ENCODE measurements at regions of chr7 and their contacts with region 1.

Region 1: GRCh38 chr7:134954197-134955082 is 31.9 kb upstream of the AGBL3 start:
- DNase-seq: peak in 6 of 9 donors; percentile 29 to 63 (median 48)
- ATAC-seq: peak; percentile 59
- H3K4me3 ChIP-seq: no peak overlapping the region
- H3K4me3 Mint-ChIP-seq: no peak overlapping the region
- H3K27ac ChIP-seq: no peak overlapping the region
- H3K27ac Mint-ChIP-seq: peak overlapping the region in 1 of 9 donors; percentile 26
- H3K4me1 ChIP-seq: no peaks in the 10 kb centered on the region
- H3K4me1 Mint-ChIP-seq: peaks cover 0 to under 1% (median 0%) of the 10 kb centered on the region in 7 donors
- H3K27me3 ChIP-seq: no peaks in the 10 kb centered on the region
- H3K27me3 Mint-ChIP-seq: no peaks in the 10 kb centered on the region

Region 2: DNA sequence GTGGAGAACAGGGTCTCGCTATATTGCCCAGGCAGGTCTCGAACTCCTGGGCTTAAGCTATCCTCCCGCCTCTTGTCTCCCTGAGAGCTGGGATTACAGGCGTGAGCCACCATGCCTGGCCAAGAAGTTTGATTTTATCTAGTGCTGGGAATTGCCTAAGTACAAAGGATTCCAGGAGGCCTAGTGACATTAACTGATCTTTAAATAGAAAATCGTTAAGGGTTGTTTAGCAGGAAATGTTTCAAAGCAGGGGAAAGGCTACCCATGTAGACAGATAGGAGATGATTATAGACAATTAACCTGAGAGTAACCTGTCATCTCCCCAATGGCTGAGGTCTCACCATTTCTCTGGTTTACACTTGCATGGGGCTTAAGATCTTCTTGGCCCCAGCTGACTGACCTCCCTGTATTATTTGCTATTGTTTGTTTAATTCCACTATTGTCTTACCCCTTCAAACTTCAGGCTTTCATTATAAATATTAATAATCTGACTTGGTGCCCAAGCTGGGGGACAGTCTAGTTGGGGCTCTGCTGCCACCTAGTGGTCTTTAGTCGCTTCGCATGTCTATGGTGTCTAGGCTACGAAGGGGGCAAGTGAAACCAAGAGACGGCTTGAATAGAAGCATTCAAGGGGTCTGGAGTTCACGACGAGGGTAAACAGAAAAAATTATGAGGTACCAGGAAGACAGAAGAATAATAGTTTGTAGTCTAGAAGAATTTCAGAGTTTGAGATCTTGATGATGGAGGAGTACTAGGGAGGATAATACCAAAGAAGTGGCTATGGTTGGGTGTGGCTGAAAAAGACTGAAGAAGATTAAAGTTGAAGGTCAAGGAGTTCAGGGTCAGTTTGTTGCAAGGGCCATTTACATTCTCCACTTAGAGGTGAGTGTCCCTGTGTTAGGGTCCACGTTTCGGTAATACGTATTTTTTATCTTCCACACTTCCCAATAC is 348.2 kb before region 1 on chr7:
- CTCF ChIA-PET with region 1: interaction called, 4 read pairs
- POLR2A ChIA-PET with region 1: no interaction called
- intact Hi-C with region 1: loop called in 1 of 2 experiments (anchors 1 kb)
- DNase-seq: peak; percentile 20 to 64 (median 50)
- ATAC-seq: peak; percentile 92
- H3K4me3 ChIP-seq: no peak overlapping the region
- H3K4me3 Mint-ChIP-seq: peak overlapping the region in 9 of 10 donors; percentile 6 to 85 (median 61)
- H3K27ac ChIP-seq: no peak overlapping the region
- H3K27ac Mint-ChIP-seq: peak overlapping the region in 1 of 9 donors; percentile 80
- H3K4me1 ChIP-seq: no peaks in the 10 kb centered on the region
- H3K4me1 Mint-ChIP-seq: peaks cover 4 to 6% (median 5%) of the 10 kb centered on the region in 7 donors
- H3K27me3 ChIP-seq: no peaks in the 10 kb centered on the region
- H3K27me3 Mint-ChIP-seq: peaks cover 4 to 48% (median 22%) of the 10 kb centered on the region in 5 donors

Region 3: GRCh38 chr7:134701272-134701671 is 253.2 kb before region 1 on chr7:
- CTCF ChIA-PET with region 1: interaction called, 7 read pairs
- POLR2A ChIA-PET with region 1: no interaction called
- intact Hi-C with region 1: loop called in 1 of 2 experiments (anchors 1 kb)
- DNase-seq: peak in 6 of 9 donors; percentile 10 to 39 (median 23)
- ATAC-seq: peak; percentile 60
- H3K4me3 ChIP-seq: no peak overlapping the region
- H3K4me3 Mint-ChIP-seq: no peak overlapping the region
- H3K27ac ChIP-seq: no peak overlapping the region
- H3K27ac Mint-ChIP-seq: peak overlapping the region in 1 of 9 donors; percentile 25
- H3K4me1 ChIP-seq: no peaks in the 10 kb centered on the region
- H3K4me1 Mint-ChIP-seq: no peaks in the 10 kb centered on the region
- H3K27me3 ChIP-seq: no peaks in the 10 kb centered on the region
- H3K27me3 Mint-ChIP-seq: peaks cover 0 to 2% (median 0%) of the 10 kb centered on the region in 5 donors

Region 4: DNA sequence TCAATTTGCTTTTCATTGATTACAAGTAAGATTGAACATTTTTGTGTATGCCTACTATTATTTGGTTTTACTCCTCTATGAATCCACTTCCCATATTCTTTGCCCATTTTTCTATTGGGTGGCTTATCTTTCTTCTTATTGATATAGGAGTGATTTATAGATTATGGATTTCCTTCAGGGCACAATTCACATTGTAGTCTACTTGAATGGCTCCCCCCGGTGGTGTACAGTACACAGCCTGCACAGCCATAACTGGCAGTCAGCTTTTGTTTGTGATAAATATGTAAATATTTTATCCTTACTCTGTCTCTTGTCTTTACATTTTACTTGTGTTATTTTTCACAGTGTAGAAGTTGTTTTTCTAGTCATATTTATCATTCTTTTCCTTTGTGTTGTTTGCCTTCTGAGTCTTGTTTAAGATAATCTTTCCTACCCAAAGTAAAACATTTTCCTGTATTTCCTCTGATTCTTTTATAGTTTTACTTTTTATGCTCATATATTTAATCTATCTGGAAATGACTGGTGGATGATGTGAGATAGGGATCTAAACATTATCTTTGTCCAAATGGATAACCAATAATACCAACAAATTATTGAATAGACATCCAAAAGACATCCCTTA is 198.9 kb before region 1 on chr7:
- CTCF ChIA-PET with region 1: interaction called, 4 read pairs
- POLR2A ChIA-PET with region 1: interaction called, 3 read pairs
- intact Hi-C with region 1: loop called (anchors 1 to 2 kb)
- DNase-seq: peak in 6 of 9 donors; percentile 8 to 38 (median 29)
- ATAC-seq: peak; percentile 38
- H3K4me3 ChIP-seq: no peak overlapping the region
- H3K4me3 Mint-ChIP-seq: no peak overlapping the region
- H3K27ac ChIP-seq: no peak overlapping the region
- H3K27ac Mint-ChIP-seq: peak overlapping the region in 1 of 9 donors; percentile 60
- H3K4me1 ChIP-seq: no peaks in the 10 kb centered on the region
- H3K4me1 Mint-ChIP-seq: peaks cover 2 to 10% (median 10%) of the 10 kb centered on the region in 7 donors
- H3K27me3 ChIP-seq: no peaks in the 10 kb centered on the region
- H3K27me3 Mint-ChIP-seq: no peaks in the 10 kb centered on the region

Region 5: DNA sequence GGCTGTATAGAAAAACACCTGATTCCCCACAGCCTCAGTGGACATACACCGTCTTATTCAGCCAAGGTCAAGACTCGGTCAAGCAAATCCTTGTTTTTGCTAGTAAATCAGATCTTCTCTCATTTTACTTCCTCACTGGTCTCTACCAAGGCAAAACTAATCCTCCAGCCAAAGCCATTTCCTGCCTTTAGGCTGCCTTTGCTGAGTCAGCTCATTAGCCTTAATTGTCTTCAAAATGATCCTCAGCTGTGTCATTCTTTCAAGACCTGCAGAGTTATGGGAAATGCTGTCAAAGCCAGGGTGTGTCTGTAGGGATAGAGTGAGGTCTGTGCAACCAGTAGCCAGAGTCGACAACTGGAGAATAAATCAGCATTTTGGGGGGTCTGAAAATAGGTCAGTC is 901.4 kb after region 1 on chr7:
- CTCF ChIA-PET with region 1: no interaction called
- POLR2A ChIA-PET with region 1: no interaction called
- intact Hi-C with region 1: no loop called
- DNase-seq: no peak
- ATAC-seq: no peak
- H3K4me3 ChIP-seq: no peak overlapping the region
- H3K4me3 Mint-ChIP-seq: no peak overlapping the region
- H3K27ac ChIP-seq: no peak overlapping the region
- H3K27ac Mint-ChIP-seq: peak overlapping the region in 1 of 9 donors; percentile 5
- H3K4me1 ChIP-seq: no peaks in the 10 kb centered on the region
- H3K4me1 Mint-ChIP-seq: peaks cover 0 to 3% (median 0%) of the 10 kb centered on the region in 7 donors
- H3K27me3 ChIP-seq: no peaks in the 10 kb centered on the region
- H3K27me3 Mint-ChIP-seq: peaks cover 0 to 28% (median 13%) of the 10 kb centered on the region in 5 donors

Measured in naive thymus-derived CD4-positive, alpha-beta T cell (primary cell).